ENCODE measurements at regions of chr11 and their contacts with region 1.

Region 1: GRCh38 chr11:34105079-34105956 is at the start of gene NAT10:
- DNase-seq: peak; percentile 98
- H3K4me3 Mint-ChIP-seq: peak within 1 kb of the TSS; percentile 95
- H3K27ac Mint-ChIP-seq: peak within 1 kb of the TSS; percentile 98
- H3K4me1 Mint-ChIP-seq: peaks cover 45% of the 10 kb centered on the region
- H3K27me3 Mint-ChIP-seq: peaks cover 4% of the 10 kb centered on the region
- total RNA-seq, gene NAT10: 84.7 to 87.6 TPM

Region 2: GRCh38 chr11:33893711-33894397 is 211.5 kb before region 1 on chr11:
- CTCF ChIA-PET with region 1: no interaction called
- POLR2A ChIA-PET with region 1: interaction called, 3 read pairs
- intact Hi-C with region 1: loop called (anchors 1 kb)
- DNase-seq: peak; percentile 88
- H3K4me3 Mint-ChIP-seq: peak overlapping the region; percentile 25
- H3K27ac Mint-ChIP-seq: no peak overlapping the region
- H3K4me1 Mint-ChIP-seq: peaks cover 31% of the 10 kb centered on the region
- H3K27me3 Mint-ChIP-seq: peaks cover 73% of the 10 kb centered on the region

Region 3: GRCh38 chr11:34051349-34052035 is 53.8 kb before region 1 on chr11 and contains the start of gene CAPRIN1:
- CTCF ChIA-PET with region 1: interaction called, 5 read pairs
- POLR2A ChIA-PET with region 1: interaction called, 11 read pairs
- intact Hi-C with region 1: loop called (anchors 1 kb)
- DNase-seq: peak; percentile 88
- H3K4me3 Mint-ChIP-seq: peak within 1 kb of the TSS; percentile 92
- H3K27ac Mint-ChIP-seq: peak within 1 kb of the TSS; percentile 96
- H3K4me1 Mint-ChIP-seq: peaks cover 18% of the 10 kb centered on the region
- H3K27me3 Mint-ChIP-seq: no peaks in the 10 kb centered on the region
- total RNA-seq, gene CAPRIN1: 261 to 264 TPM

Region 4: GRCh38 chr11:34086554-34087283 is 18.6 kb before region 1 on chr11:
- CTCF ChIA-PET with region 1: interaction called, 7 read pairs
- POLR2A ChIA-PET with region 1: interaction called, 4 read pairs
- intact Hi-C with region 1: loop called (anchors 2 kb)
- DNase-seq: no peak
- H3K4me3 Mint-ChIP-seq: no peak overlapping the region
- H3K27ac Mint-ChIP-seq: peak overlapping the region; percentile 55
- H3K4me1 Mint-ChIP-seq: peaks cover 28% of the 10 kb centered on the region
- H3K27me3 Mint-ChIP-seq: no peaks in the 10 kb centered on the region

Region 5: GRCh38 chr11:34120651-34121050 is 15.3 kb after region 1 on chr11:
- CTCF ChIA-PET with region 1: no interaction called
- POLR2A ChIA-PET with region 1: no interaction called
- intact Hi-C with region 1: no loop called
- DNase-seq: no peak
- H3K4me3 Mint-ChIP-seq: no peak overlapping the region
- H3K27ac Mint-ChIP-seq: no peak overlapping the region
- H3K4me1 Mint-ChIP-seq: no peaks in the 10 kb centered on the region
- H3K27me3 Mint-ChIP-seq: no peaks in the 10 kb centered on the region

Measured in activated CD4-positive, alpha-beta memory T cell treated with anti-CD3 and anti-CD28 coated beads for 36 hours (primary cell).